ENCODE measurements at regions of chr6 and their contacts with region 1.

Region 1: GRCh38 chr6:53544470-53545308 is at the start of gene GCLC:
- DNase-seq: peak; percentile 93
- ATAC-seq: peak; percentile 68
- H3K4me3 Mint-ChIP-seq: peak within 1 kb of the TSS; percentile 89
- H3K27ac Mint-ChIP-seq: peak within 1 kb of the TSS; percentile 96
- H3K4me1 Mint-ChIP-seq: peaks cover 46% of the 10 kb centered on the region
- H3K27me3 Mint-ChIP-seq: peaks cover 17% of the 10 kb centered on the region
- total RNA-seq, gene GCLC: 22.1 to 26.5 TPM

Region 2: DNA sequence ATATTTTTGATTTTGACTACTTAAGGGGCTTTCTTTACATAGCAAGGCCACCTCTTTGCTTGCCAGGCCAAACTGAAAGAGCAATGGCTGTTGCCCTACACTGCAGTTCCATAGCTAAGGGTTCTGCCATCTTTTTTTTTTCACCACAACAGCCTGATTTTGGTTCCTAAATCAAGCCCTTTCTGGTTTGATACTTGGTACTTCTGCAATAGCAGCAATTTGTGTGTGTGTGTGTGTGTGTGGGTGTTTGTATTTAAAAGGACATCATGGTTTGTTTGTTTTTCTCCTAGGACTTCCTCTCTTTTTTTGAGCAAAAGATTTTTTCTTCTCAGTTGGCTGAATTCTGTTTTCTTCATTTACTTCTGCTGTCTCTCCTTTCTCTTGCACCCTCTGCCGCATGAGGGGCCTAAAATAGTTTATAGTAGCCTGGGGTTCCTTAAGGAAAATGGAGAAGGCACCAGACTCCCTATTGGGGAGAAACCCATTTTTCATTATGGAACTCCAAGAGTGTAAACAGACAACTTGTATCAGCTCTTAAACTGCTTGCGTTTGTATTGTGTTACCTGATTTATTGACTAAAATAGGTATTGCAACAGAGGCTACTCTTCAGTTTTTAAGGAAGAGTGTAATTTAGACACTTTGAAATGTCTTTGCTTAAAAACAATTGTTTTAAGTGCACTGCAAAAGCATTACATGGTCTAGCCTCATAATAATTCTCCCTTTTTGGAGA is 12.5 kb after region 1 on chr6:
- CTCF ChIA-PET with region 1: no interaction called
- POLR2A ChIA-PET with region 1: no interaction called
- DNase-seq: no peak
- ATAC-seq: no peak
- H3K4me3 Mint-ChIP-seq: no peak overlapping the region
- H3K27ac Mint-ChIP-seq: no peak overlapping the region
- H3K4me1 Mint-ChIP-seq: no peaks in the 10 kb centered on the region
- H3K27me3 Mint-ChIP-seq: no peaks in the 10 kb centered on the region

Region 3: DNA sequence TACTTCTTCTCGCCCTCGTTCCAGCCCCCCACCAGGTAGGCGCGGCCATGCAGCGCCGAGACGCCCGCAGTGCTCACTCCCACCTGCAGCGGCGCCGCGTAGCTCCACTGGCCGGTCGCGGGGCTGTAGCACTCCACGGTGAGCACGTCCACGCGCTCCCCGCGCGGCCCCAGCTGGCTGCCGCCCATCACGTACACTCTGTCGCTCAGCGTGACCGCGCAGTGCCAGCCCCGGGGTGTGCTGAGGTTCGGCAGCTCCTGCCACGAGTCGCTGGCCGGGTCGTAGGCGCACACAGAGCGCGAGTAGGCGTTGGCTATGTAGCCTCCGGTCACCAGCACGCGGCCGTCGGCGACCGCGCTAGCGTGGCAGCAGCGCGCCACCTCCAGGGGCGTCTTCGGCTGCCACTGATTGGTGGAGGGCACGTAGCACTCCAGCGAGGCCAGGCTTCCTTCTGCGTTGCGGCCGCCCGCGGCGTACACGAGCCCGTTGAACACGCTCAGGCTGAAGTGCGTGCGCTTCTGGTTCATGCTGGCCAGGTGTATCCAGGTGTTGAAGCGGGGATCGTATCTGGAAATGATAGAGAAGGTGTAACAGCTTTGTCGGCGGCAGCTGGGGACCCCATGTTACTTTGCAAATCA is 107.2 kb after region 1 on chr6:
- CTCF ChIA-PET with region 1: interaction called, 38 read pairs
- POLR2A ChIA-PET with region 1: interaction called, 8 read pairs
- DNase-seq: peak; percentile 82
- ATAC-seq: peak; percentile 93
- H3K4me3 Mint-ChIP-seq: peak overlapping the region; percentile 89
- H3K27ac Mint-ChIP-seq: peak overlapping the region; percentile 87
- H3K4me1 Mint-ChIP-seq: peaks cover 38% of the 10 kb centered on the region
- H3K27me3 Mint-ChIP-seq: peaks cover 7% of the 10 kb centered on the region

Region 4: GRCh38 chr6:53707108-53707897 is 162.6 kb after region 1 on chr6:
- CTCF ChIA-PET with region 1: no interaction called
- POLR2A ChIA-PET with region 1: no interaction called
- DNase-seq: no peak
- ATAC-seq: no peak
- H3K4me3 Mint-ChIP-seq: no peak overlapping the region
- H3K27ac Mint-ChIP-seq: no peak overlapping the region
- H3K4me1 Mint-ChIP-seq: peaks cover 5% of the 10 kb centered on the region
- H3K27me3 Mint-ChIP-seq: peaks cover 10% of the 10 kb centered on the region